Activated T-helper 2 cell treated with anti-CD3 and anti-CD28 coated beads, Interferon-gamma antibody, Interleukin-2, Interleukin-4, amounts not matched to agents 10 μg/mL and 5 μg/mL and 100 μg/mL, durations not matched to agents 14 hours and 24 hours and 36 hours (primary cell): ENCODE measurements at regions of chr11 and their contacts with region 1.

Region 1: DNA sequence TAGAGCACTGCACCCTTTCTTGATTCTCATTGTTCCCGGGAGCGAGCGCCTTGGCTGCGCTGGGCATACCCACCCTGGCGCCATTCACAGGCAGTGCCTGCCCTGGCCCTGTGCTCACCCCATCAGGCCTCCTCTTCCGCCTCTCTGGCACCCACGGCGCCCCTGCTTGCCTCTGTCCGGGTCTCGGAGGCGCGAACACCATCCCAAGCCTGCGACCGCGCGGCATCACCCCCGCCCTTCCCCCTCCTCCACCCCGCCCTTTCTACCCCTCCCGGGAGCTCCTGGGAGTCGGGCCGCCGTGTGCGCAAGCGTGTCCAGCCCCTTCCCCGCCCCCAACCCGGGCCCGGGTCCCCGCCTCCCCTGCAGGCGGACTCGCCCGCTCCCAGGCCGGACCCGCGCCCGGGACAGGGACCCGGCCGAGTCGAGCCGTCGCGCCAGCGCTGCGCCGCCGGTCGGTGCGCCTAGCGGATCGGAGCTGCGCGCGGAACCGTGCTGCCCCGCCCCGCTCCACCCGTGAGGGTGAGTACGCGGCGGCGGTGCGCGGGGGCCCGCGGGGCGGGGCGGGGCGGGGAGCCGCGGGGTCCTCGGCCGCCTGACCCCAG is at the start of gene ST3GAL4:
- DNase-seq: peak; percentile 66
- H3K4me3 Mint-ChIP-seq: peak within 1 kb of the TSS; percentile 98
- H3K27ac Mint-ChIP-seq: peak within 1 kb of the TSS; percentile 91
- H3K4me1 Mint-ChIP-seq: peaks cover 35% of the 10 kb centered on the region
- H3K27me3 Mint-ChIP-seq: no peaks in the 10 kb centered on the region
- total RNA-seq, gene ST3GAL4: 12.4 and 14.4 TPM in 2 replicates

Region 2: GRCh38 chr11:126211235-126212088 is 144.0 kb before region 1 on chr11 and contains the starts of genes FAM118B and RPUSD4:
- intact Hi-C with region 1: loop called (anchors 5 kb)
- DNase-seq: peak; percentile 98
- H3K4me3 Mint-ChIP-seq: peak within 1 kb of the TSS; percentile 99
- H3K27ac Mint-ChIP-seq: peak within 1 kb of the TSS; percentile 92
- H3K4me1 Mint-ChIP-seq: peaks cover 27% of the 10 kb centered on the region
- H3K27me3 Mint-ChIP-seq: no peaks in the 10 kb centered on the region
- total RNA-seq, gene FAM118B: 11.6 and 11.7 TPM in 2 replicates
- total RNA-seq, gene RPUSD4: 43.9 and 44.6 TPM in 2 replicates

Region 3: DNA sequence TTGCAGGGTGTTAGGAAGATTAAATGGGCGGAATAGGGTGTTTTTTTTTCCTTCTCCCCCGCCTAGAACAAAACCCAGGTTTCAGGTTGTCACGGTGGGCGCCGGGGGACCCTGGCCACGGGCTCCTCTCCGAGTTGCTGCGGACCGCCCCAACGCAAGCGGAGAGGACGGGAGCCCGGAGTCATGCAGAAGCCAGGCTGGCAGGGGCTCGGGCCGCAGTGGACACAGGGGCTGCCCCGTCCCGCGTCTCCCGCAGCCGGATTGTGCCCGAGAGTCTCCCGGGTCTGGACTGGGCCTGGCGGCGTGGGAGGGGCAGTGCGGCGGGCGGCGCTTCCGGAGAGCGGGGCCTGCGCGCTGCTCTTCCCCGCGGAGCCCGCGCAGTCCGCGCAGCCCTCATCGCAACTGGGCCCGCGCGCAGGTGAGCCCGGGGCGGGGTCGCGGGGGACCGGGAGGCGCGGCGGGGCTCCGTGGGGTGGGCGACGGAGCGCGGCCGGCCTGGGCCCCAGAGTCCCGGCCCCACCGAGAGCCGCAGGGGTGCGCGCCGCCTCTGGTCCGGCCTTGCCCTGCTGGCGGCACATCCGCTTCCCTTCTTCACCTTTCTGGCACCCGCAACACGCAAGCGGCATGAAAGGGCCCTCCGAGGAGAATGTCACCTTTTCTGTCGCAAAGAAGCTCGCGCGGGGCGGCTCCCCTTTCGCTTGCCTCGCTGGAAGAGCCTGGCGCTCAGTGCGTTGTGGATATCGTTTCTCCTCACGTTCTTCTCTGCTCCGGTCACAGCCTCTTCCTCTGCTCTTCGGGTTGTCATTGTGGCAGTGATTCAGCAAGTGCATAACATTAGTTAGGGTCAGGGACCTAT is 72.5 kb before region 1 on chr11 and contains the start of gene TIRAP:
- intact Hi-C with region 1: loop called (anchors 1 kb)
- DNase-seq: peak; percentile 55
- H3K4me3 Mint-ChIP-seq: peak within 1 kb of the TSS; percentile 99
- H3K27ac Mint-ChIP-seq: peak within 1 kb of the TSS; percentile 99
- H3K4me1 Mint-ChIP-seq: peaks cover 35% of the 10 kb centered on the region
- H3K27me3 Mint-ChIP-seq: no peaks in the 10 kb centered on the region
- total RNA-seq, gene TIRAP: 15.9 TPM in 2 replicates

Region 4: DNA sequence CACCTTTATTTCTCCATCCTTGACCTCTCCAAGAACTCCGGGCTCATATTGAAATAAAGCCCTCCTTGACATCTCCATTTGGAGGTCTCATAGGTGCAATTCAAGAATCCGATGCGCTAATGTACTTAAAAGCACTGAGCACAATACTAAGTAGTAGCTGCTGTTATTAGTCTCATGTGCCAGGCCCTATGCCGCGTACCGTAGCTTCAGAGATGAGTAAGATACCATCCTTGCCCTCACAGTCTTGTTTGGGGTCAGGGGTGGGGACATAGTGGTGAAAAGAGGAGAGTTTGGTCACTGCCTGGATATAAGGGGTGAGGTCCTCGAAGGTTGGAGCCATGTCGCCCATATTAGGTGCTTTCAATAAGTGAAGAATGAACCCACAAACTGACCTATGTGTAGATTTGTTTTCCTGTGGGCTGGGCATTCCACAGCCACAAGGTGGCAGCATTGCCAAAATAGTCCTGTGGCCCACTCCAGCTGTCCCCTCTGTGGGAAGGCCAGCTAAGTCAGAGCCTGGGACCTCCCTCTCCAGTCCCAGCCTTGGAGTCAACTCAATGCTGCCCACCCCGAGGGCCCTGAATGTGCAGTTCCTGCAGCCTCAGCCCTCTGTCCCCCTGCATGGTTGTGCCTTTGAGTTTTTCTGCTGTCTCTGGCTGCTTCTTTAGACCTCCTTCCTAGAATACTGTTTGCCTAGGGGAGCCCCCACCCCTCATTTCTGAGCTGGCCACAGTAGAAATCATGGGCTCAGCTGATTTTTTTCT is 45.0 kb before region 1 on chr11:
- intact Hi-C with region 1: loop called (anchors 1 kb)
- DNase-seq: peak; percentile 41
- H3K4me3 Mint-ChIP-seq: no peak overlapping the region
- H3K27ac Mint-ChIP-seq: no peak overlapping the region
- H3K4me1 Mint-ChIP-seq: peaks cover 29% of the 10 kb centered on the region
- H3K27me3 Mint-ChIP-seq: no peaks in the 10 kb centered on the region

Region 5: GRCh38 chr11:126403658-126404057 is 48.2 kb after region 1 on chr11:
- intact Hi-C with region 1: no loop called
- DNase-seq: no peak
- H3K4me3 Mint-ChIP-seq: no peak overlapping the region
- H3K27ac Mint-ChIP-seq: no peak overlapping the region
- H3K4me1 Mint-ChIP-seq: peaks cover 3% of the 10 kb centered on the region
- H3K27me3 Mint-ChIP-seq: no peaks in the 10 kb centered on the region

Region 6: GRCh38 chr11:126419801-126420697 is 64.6 kb after region 1 on chr11:
- intact Hi-C with region 1: loop called (anchors 2 kb)
- DNase-seq: no peak
- H3K4me3 Mint-ChIP-seq: no peak overlapping the region
- H3K27ac Mint-ChIP-seq: no peak overlapping the region
- H3K4me1 Mint-ChIP-seq: peaks cover 28% of the 10 kb centered on the region
- H3K27me3 Mint-ChIP-seq: peaks cover 7% of the 10 kb centered on the region

Region 7: GRCh38 chr11:126624506-126624905 is 269.1 kb after region 1 on chr11:
- intact Hi-C with region 1: no loop called
- DNase-seq: no peak
- H3K4me3 Mint-ChIP-seq: no peak overlapping the region
- H3K27ac Mint-ChIP-seq: no peak overlapping the region
- H3K4me1 Mint-ChIP-seq: no peaks in the 10 kb centered on the region
- H3K27me3 Mint-ChIP-seq: peaks cover 4% of the 10 kb centered on the region